ENCODE measurements at regions of chr3 and their contacts with region 1.

Region 1: DNA sequence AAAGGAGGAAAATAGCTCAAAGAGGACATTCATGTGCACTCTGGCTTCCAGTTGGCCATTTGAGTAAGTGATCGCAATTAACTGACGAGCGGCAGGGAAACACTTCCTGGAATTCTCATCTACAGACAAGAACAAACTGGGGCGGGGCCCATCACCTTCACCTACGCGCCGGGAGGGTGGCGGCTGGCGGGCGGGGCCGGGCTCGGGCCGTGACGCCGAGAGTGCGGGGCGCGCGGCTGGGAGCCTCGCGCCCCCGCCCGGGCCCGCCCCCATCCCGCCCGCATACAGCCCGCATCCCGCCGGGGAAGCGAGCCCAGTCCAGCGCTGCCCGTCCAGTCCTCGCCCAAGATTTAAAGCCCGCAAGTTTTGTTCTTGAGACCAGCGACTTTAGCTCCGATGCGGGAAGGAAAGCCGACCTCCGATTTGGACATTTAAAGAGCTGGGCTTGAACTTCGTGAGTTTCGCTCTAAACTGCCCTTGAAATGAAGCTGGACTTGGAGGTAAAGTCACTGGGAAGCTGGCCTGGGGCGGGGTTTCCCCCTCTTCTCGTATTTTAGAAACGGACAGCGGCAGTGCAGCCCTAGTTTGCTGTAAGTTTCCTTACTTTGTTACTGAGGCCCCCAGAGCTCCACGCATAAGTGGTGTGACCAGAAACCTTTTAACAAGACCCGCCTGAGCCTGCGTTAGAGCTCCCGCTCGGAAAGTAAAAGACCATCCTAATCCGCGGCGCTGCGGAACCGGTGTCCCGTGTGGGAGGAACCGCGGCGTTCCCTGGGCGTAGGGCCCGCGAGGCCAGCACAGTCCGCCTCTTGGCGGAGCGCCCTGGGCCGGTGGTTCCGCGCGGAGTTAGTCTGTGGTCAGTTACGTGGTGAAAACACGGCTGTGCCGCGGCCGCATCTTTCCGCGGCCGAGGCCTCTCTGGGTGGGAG is at the start of gene B3GNT5:
- DNase-seq: peak; percentile 81
- H3K4me3 Mint-ChIP-seq: peak within 1 kb of the TSS; percentile 84
- H3K27ac Mint-ChIP-seq: peak within 1 kb of the TSS; percentile 72
- H3K4me1 Mint-ChIP-seq: peaks cover 16% of the 10 kb centered on the region
- H3K27me3 Mint-ChIP-seq: peaks cover 12% of the 10 kb centered on the region
- total RNA-seq, gene B3GNT5: 25.0 and 27.9 TPM in 2 replicates

Region 2: GRCh38 chr3:183188895-183189462 is 64.3 kb before region 1 on chr3:
- intact Hi-C with region 1: loop called (anchors 5 kb)
- DNase-seq: peak; percentile 69
- H3K4me3 Mint-ChIP-seq: no peak overlapping the region
- H3K27ac Mint-ChIP-seq: no peak overlapping the region
- H3K4me1 Mint-ChIP-seq: peaks cover 15% of the 10 kb centered on the region
- H3K27me3 Mint-ChIP-seq: no peaks in the 10 kb centered on the region

Region 3: GRCh38 chr3:183224180-183224970 is 28.9 kb before region 1 on chr3:
- intact Hi-C with region 1: loop called (anchors 1 kb)
- DNase-seq: peak; percentile 85
- H3K4me3 Mint-ChIP-seq: peak overlapping the region; percentile 74
- H3K27ac Mint-ChIP-seq: peak overlapping the region; percentile 73
- H3K4me1 Mint-ChIP-seq: peaks cover 32% of the 10 kb centered on the region
- H3K27me3 Mint-ChIP-seq: no peaks in the 10 kb centered on the region

Region 4: GRCh38 chr3:183306798-183307671 is 53.8 kb after region 1 on chr3:
- intact Hi-C with region 1: no loop called
- DNase-seq: peak; percentile 79
- H3K4me3 Mint-ChIP-seq: peak overlapping the region; percentile 20
- H3K27ac Mint-ChIP-seq: peak overlapping the region; percentile 65
- H3K4me1 Mint-ChIP-seq: peaks cover 28% of the 10 kb centered on the region
- H3K27me3 Mint-ChIP-seq: no peaks in the 10 kb centered on the region

Region 5: DNA sequence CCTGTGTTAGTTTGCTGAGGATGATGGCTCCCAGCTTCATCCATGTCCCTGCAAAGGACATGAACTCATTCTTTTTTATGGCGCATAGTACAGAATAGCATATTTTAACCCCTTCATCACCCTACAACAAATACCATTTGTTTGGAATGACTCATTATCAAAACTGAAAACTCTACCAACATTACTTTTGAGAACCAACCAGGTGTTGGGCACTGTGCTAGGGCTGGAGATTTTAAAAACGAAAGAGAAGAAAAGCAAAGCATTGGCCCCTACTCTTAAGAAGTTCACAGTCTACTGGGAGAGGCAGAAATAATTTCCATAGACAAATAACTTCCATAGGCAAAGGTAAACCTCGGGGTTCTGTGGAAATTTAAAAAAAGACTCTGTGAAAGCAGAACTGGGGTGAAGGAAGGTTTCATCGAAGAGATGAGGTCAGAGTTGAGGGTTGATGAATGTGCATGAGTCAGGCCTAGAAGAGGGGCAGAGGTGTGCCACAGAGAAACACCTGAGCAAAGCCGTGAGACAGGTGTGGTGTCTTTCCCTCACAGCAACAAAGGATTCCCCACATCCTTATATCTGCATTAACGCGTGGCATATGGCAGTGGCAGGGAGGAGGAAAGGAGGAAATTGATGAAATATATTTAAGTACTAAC is 124.2 kb after region 1 on chr3:
- intact Hi-C with region 1: loop called (anchors 2 kb)
- DNase-seq: no peak
- H3K4me3 Mint-ChIP-seq: no peak overlapping the region
- H3K27ac Mint-ChIP-seq: peak overlapping the region; percentile 71
- H3K4me1 Mint-ChIP-seq: peaks cover 25% of the 10 kb centered on the region
- H3K27me3 Mint-ChIP-seq: no peaks in the 10 kb centered on the region

Region 6: DNA sequence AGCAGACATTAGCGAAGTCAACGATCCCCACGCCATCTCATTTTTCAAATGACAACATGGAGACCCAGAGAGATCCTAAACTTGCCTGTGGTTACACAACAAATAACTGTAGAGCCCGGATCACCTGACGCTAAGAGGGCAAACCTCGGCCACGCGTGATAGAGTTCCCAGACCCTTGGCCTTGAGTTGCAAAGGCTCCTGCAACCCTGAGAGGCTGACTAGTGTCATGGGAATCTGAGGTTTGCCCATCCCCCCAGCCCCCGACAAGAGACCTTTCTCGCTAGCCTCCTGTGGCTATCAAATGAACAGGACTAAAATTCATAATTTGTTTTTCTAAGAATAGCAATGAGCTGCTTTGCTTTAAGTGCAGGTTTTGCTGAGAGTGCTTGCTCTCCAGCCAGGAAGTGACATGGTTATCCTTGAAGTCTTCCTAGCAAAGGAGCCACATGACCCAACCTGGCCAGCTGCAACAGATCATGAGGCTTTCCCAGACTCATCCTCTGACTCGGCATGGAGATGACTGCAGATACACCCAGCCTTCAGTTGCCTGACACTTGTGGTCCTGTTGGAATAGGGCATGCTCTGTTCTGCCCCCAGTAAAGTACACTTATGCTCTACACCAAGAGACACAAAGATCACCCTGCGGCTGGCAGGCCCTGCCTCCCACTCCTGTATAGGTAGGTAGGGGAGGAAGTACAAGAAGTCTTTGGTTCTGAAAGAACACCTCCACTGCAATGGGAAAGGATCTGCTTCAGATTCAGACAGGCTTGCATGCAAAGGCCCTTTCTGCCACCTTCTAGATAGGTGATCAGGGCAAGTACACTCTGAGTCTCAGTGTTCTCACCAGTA is 139.2 kb after region 1 on chr3:
- intact Hi-C with region 1: no loop called
- DNase-seq: no peak
- H3K4me3 Mint-ChIP-seq: no peak overlapping the region
- H3K27ac Mint-ChIP-seq: no peak overlapping the region
- H3K4me1 Mint-ChIP-seq: peaks cover 5% of the 10 kb centered on the region
- H3K27me3 Mint-ChIP-seq: peaks cover 3% of the 10 kb centered on the region